H1 (cell line): ENCODE measurements at regions of chr2 and their contacts with region 1.

Region 1: DNA sequence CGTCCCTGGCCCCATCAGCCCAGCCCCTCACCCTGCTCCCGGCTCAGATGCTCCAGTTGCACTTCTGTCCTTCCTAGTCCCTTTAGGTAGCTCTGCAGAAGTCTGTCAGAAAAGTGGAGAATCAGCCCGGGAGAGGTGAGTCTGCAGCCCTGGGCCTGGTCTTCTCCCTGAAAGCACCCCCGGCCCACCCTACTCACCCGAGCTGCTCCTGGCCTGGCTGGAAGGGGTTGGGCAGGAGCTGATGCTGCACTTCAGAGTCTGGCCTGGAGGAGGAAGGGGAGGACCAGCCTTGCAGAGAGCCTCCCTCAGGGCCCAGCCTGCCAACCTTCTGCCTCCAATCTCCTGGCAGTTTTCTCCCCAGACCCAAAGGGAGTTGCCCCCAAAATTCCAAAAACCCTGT is 15.8 kb downstream of the KHK start:
- DNase-seq: no peak
- H3K4me3 ChIP-seq: no peak overlapping the region
- H3K27ac ChIP-seq: no peak overlapping the region
- H3K4me1 ChIP-seq: no peaks in the 10 kb centered on the region
- H3K27me3 ChIP-seq: no peaks in the 10 kb centered on the region; a peak in 1 of 7 replicates
- CTCF ChIP-seq: no peak
- EP300 ChIP-seq: no peak
- POLR2A ChIP-seq: no peak
- RAD21 ChIP-seq: peak in 1 of 2 experiments; percentile 29; a peak in 1 of 4 replicates

Region 2: DNA sequence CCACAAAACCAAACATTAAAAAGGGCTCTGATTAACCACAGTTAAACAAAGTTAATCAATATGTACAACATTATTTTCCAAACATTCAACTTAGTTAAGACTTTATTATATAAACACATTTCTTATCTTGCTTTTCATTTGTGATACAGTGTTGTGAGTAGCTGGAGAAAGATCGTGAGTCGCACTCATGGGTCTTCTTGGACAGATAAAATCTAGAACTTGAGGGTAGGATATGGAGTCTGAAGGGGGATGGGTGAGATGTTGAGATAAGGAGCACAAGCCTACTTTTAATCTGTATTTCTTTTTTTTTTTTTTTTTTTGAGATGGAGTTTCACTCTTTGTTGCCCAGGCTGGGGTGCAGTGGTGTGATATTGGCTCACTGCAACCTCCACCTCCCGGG is 92.2 kb before region 1 on chr2:
- CTCF ChIA-PET with region 1: no interaction called
- POLR2A ChIA-PET with region 1: no interaction called
- DNase-seq: no peak
- H3K4me3 ChIP-seq: no peak overlapping the region
- H3K27ac ChIP-seq: no peak overlapping the region
- H3K4me1 ChIP-seq: no peaks in the 10 kb centered on the region
- H3K27me3 ChIP-seq: no peaks in the 10 kb centered on the region; a peak in 1 of 7 replicates
- CTCF ChIP-seq: no peak
- EP300 ChIP-seq: no peak
- POLR2A ChIP-seq: no peak
- RAD21 ChIP-seq: no peak

Region 3: GRCh38 chr2:27079233-27080139 is 22.8 kb before region 1 on chr2:
- CTCF ChIA-PET with region 1: interaction called, 12 read pairs
- POLR2A ChIA-PET with region 1: no interaction called
- DNase-seq: no peak
- H3K4me3 ChIP-seq: no peak overlapping the region
- H3K27ac ChIP-seq: no peak overlapping the region
- H3K4me1 ChIP-seq: peaks cover 0 to 19% (median 13%) of the 10 kb centered on the region in 4 experiments; a peak in 6 of 7 replicates
- H3K27me3 ChIP-seq: peaks cover 0 to 3% (median 0%) of the 10 kb centered on the region in 4 experiments; a peak in 1 of 7 replicates
- CTCF ChIP-seq: no peak
- EP300 ChIP-seq: no peak
- POLR2A ChIP-seq: no peak
- RAD21 ChIP-seq: no peak

Region 4: GRCh38 chr2:27133905-27134780 is 31.8 kb after region 1 on chr2 and contains the start of gene PREB:
- CTCF ChIA-PET with region 1: interaction called, 30 read pairs
- POLR2A ChIA-PET with region 1: interaction called, 10 read pairs
- DNase-seq: peak; percentile 92 to 100
- H3K4me3 ChIP-seq: peak within 1 kb of the TSS; percentile 68 to 91 (median 88)
- H3K27ac ChIP-seq: peak within 1 kb of the TSS; percentile 25; the same call in 1 of the 2 replicates
- H3K4me1 ChIP-seq: peaks cover 0 to 4% (median 3%) of the 10 kb centered on the region in 4 experiments; a peak in 5 of 7 replicates
- H3K27me3 ChIP-seq: no peaks in the 10 kb centered on the region
- CTCF ChIP-seq: peak in 2 of 3 experiments; percentile 46 to 60; a peak in 2 of 4 replicates
- EP300 ChIP-seq: no peak
- POLR2A ChIP-seq: no peak
- RAD21 ChIP-seq: peak; percentile 56 to 67
- total RNA-seq, gene PREB: 51.2 and 54.1 TPM in 2 replicates

Region 5: GRCh38 chr2:27174316-27175040 is 72.1 kb after region 1 on chr2:
- CTCF ChIA-PET with region 1: interaction called, 19 read pairs
- POLR2A ChIA-PET with region 1: interaction called, 3 read pairs
- DNase-seq: no peak
- H3K4me3 ChIP-seq: no peak overlapping the region
- H3K27ac ChIP-seq: no peak overlapping the region
- H3K4me1 ChIP-seq: no peaks in the 10 kb centered on the region
- H3K27me3 ChIP-seq: no peaks in the 10 kb centered on the region; a peak in 4 of 7 replicates
- CTCF ChIP-seq: no peak
- EP300 ChIP-seq: no peak
- POLR2A ChIP-seq: no peak
- RAD21 ChIP-seq: no peak

Region 6: GRCh38 chr2:27202854-27203253 is 100.5 kb after region 1 on chr2:
- CTCF ChIA-PET with region 1: interaction called, 15 read pairs
- POLR2A ChIA-PET with region 1: no interaction called
- DNase-seq: no peak
- H3K4me3 ChIP-seq: no peak overlapping the region
- H3K27ac ChIP-seq: no peak overlapping the region
- H3K4me1 ChIP-seq: no peaks in the 10 kb centered on the region
- H3K27me3 ChIP-seq: no peaks in the 10 kb centered on the region
- CTCF ChIP-seq: no peak
- EP300 ChIP-seq: no peak
- POLR2A ChIP-seq: no peak
- RAD21 ChIP-seq: no peak